ENCODE measurements at regions of chr10 and their contacts with region 1.

Region 1: DNA sequence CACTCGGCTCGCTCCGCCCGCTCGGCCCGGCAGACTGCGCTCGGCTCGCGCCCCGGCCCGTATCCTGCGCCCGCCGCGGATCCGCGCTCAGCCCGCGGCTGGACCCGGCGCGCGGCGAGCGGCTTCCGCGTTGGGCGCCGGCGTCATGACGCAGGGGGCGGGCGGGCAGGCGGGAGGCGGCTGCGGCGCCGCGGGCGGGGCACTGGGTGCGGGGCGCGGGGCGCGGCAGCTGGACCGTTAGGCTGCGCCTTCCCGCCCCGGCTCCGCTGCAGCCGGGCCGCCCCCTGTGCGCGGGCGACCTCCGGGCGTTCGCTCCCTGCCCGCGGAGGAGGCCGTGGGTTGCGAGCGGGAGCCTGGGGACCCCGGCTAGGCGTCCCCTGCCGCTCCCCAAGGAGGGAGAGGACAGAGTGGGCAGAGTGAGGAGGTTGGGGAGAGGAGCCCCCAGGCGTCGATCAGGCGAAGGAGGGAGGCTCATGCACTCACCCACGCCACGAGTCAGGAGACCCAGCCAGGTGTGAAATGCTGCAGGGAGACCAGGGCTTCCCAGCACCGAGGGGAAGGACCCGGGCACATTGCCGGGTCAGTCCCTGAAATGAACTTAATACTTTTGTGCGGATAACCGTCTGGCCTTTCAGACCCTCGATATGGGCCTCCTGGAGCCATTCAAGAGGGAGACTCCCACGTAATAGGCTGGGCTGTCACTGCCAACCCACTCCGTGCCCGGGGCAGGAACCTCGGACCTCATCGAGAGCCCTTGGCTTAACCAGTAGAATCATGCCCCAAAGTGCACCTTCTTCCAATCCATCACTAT is at the start of gene PIP4K2A:
- DNase-seq: peak; percentile 63 to 81 (median 76)
- ATAC-seq: peak; percentile 80 to 83
- H3K4me3 Mint-ChIP-seq: peak within 1 kb of the TSS; percentile 75 to 96 (median 88)
- H3K27ac Mint-ChIP-seq: peak within 1 kb of the TSS; percentile 87 to 96 (median 94)
- H3K4me1 Mint-ChIP-seq: peaks cover 22 to 43% (median 30%) of the 10 kb centered on the region in 4 donors
- H3K27me3 Mint-ChIP-seq: no peaks in the 10 kb centered on the region
- polyA plus RNA-seq, gene PIP4K2A: 54.3 to 77.5 (median 59.9) TPM

Region 2: GRCh38 chr10:22615819-22616499 is 98.7 kb before region 1 on chr10:
- POLR2A ChIA-PET with region 1: interaction called, 17 read pairs
- DNase-seq: no peak
- ATAC-seq: no peak
- H3K4me3 Mint-ChIP-seq: peak overlapping the region; percentile 16 to 73 (median 62)
- H3K27ac Mint-ChIP-seq: peak overlapping the region; percentile 73 to 97 (median 83)
- H3K4me1 Mint-ChIP-seq: peaks cover 56 to 98% (median 94%) of the 10 kb centered on the region in 4 donors
- H3K27me3 Mint-ChIP-seq: no peaks in the 10 kb centered on the region

Region 3: GRCh38 chr10:22648547-22648961 is 66.1 kb before region 1 on chr10:
- POLR2A ChIA-PET with region 1: interaction called, 19 read pairs
- DNase-seq: no peak
- ATAC-seq: no peak
- H3K4me3 Mint-ChIP-seq: peak overlapping the region; percentile 40 to 87 (median 74)
- H3K27ac Mint-ChIP-seq: peak overlapping the region; percentile 80 to 98 (median 96)
- H3K4me1 Mint-ChIP-seq: peaks cover 62 to 96% (median 94%) of the 10 kb centered on the region in 4 donors
- H3K27me3 Mint-ChIP-seq: no peaks in the 10 kb centered on the region

Region 4: GRCh38 chr10:22655311-22655981 is 59.2 kb before region 1 on chr10:
- POLR2A ChIA-PET with region 1: interaction called, 67 read pairs
- DNase-seq: peak in 9 of 10 donors; percentile 35 to 90 (median 75)
- ATAC-seq: peak; percentile 83 to 85
- H3K4me3 Mint-ChIP-seq: peak overlapping the region; percentile 63 to 84 (median 80)
- H3K27ac Mint-ChIP-seq: peak overlapping the region; percentile 92 to 98 (median 96)
- H3K4me1 Mint-ChIP-seq: peaks cover 48 to 99% (median 96%) of the 10 kb centered on the region in 4 donors
- H3K27me3 Mint-ChIP-seq: no peaks in the 10 kb centered on the region

Region 5: DNA sequence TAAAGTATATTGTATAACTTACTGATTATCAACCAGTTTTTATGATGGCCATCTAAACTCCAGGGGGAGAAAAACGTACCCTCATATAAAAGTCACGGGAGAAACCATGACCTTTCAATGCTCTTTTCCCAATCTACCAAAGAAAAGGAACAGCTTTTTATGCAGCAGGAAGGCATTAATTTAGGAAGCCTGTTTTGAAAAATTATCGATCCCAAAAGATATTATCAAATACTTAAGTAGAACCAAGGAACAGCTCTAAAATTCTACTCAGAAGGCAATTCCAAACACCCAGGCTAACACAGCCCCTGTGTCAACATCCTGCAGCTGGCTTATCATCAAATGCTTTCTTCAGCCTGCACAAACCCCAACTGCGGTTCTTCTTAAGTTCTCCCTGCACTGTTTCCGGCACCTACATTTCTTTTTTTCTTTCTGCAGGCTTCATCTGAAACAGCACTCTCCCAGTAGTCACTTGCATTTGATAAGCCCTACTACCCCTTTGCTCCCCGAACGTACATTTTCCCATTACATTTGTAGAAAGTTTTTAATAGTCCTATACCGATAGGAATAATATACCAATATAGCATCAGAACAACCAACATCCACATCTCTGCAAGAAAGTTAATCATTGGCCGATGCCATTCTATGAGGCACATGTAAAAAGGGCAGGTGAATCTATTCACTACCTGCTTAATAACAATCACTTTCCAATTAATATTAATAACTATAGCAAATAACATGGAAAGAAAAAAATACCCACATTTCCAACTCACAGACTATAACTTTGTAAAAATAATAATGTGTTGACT is 48.2 kb before region 1 on chr10:
- POLR2A ChIA-PET with region 1: interaction called, 15 read pairs
- DNase-seq: peak; percentile 16 to 91 (median 76)
- ATAC-seq: peak; percentile 86 to 91
- H3K4me3 Mint-ChIP-seq: peak overlapping the region; percentile 77 to 93 (median 88)
- H3K27ac Mint-ChIP-seq: peak overlapping the region; percentile 85 to 96 (median 90)
- H3K4me1 Mint-ChIP-seq: peaks cover 38 to 93% (median 79%) of the 10 kb centered on the region in 4 donors
- H3K27me3 Mint-ChIP-seq: no peaks in the 10 kb centered on the region

Region 6: DNA sequence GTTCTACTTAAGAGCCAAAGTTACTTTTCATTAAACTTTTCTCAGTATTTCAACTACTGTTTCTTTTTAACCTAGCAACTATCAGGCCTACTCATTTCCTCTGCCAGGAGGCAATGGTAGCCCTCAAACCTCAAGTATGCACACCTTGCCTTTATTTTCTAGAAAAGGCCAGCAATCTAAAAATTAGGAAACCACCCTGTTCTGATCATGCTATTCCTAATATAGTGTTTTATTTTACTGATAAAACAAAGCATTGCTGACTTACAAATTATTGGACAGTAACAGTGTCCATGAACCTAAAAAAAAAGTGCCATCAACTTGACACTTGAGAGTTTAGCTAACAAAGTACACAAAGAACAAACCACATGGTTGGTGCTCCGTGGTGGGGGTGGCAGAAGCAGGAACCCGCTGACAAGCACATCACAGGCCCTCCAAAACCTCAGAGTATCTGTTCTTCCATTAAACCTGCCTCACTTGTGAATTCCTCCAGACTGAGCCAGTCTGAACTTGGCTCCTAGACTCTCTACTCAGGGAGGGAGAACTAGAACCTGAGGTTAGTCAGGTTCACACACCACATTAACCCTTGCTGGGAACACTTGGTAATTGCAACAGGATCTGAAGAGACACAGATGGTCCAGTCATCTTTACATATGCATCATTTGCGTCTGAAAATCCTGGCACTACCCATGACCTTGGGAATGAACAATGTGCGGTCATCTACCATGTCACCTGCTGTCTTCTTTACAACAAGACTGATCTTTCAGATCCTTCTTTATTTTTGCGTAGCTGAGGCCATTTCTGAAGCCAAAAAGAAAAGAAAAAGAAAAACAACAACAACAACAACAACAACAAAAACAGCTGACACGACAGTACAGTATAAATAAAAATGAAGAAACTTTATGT is 32.2 kb before region 1 on chr10:
- POLR2A ChIA-PET with region 1: interaction called, 27 read pairs
- DNase-seq: peak; percentile 20 to 85 (median 70)
- ATAC-seq: peak; percentile 66 to 76
- H3K4me3 Mint-ChIP-seq: peak overlapping the region; percentile 59 to 90 (median 80)
- H3K27ac Mint-ChIP-seq: peak overlapping the region; percentile 93 to 99 (median 97)
- H3K4me1 Mint-ChIP-seq: peaks cover 48 to 92% (median 86%) of the 10 kb centered on the region in 4 donors
- H3K27me3 Mint-ChIP-seq: no peaks in the 10 kb centered on the region

Region 7: GRCh38 chr10:22704471-22704911 is 10.2 kb before region 1 on chr10:
- POLR2A ChIA-PET with region 1: interaction called, 17 read pairs
- DNase-seq: no peak
- ATAC-seq: peak in 1 of 2 donors; percentile 33
- H3K4me3 Mint-ChIP-seq: peak overlapping the region in 9 of 10 donors; percentile 59 to 84 (median 68)
- H3K27ac Mint-ChIP-seq: peak overlapping the region; percentile 79 to 94 (median 89)
- H3K4me1 Mint-ChIP-seq: peaks cover 71 to 100% (median 97%) of the 10 kb centered on the region in 4 donors
- H3K27me3 Mint-ChIP-seq: no peaks in the 10 kb centered on the region

Region 8: GRCh38 chr10:22780474-22780885 is 65.8 kb after region 1 on chr10:
- POLR2A ChIA-PET with region 1: no interaction called
- DNase-seq: no peak
- ATAC-seq: no peak
- H3K4me3 Mint-ChIP-seq: no peak overlapping the region
- H3K27ac Mint-ChIP-seq: peak overlapping the region in 2 of 10 donors; percentile 21 to 22
- H3K4me1 Mint-ChIP-seq: peaks cover 5 to 13% (median 7%) of the 10 kb centered on the region in 4 donors
- H3K27me3 Mint-ChIP-seq: peaks cover 0 to 1% (median 0%) of the 10 kb centered on the region in 5 donors

Measured in naive thymus-derived CD8-positive, alpha-beta T cell (primary cell).